Common myeloid progenitor, CD34-positive (primary cell): ENCODE measurements at regions of chr9 and their contacts with region 1.

Region 1: GRCh38 chr9:121278535-121279261 is 10.7 kb downstream of the GSN start:
- DNase-seq: peak; percentile 59 to 87 (median 83)
- H3K4me3 ChIP-seq: peak overlapping the region in 1 of 7 experiments; percentile 29
- H3K27ac ChIP-seq: no peak overlapping the region
- H3K4me1 ChIP-seq: peaks cover 14 to 92% (median 68%) of the 10 kb centered on the region in 4 experiments
- H3K27me3 ChIP-seq: no peaks in the 10 kb centered on the region

Region 2: GRCh38 chr9:121206516-121207370 is 72.0 kb before region 1 on chr9:
- CTCF ChIA-PET with region 1: interaction called, 82 read pairs
- POLR2A ChIA-PET with region 1: no interaction called
- DNase-seq: no peak
- H3K4me3 ChIP-seq: no peak overlapping the region
- H3K27ac ChIP-seq: no peak overlapping the region
- H3K4me1 ChIP-seq: peaks cover 4 to 19% (median 8%) of the 10 kb centered on the region in 4 experiments
- H3K27me3 ChIP-seq: no peaks in the 10 kb centered on the region

Region 3: GRCh38 chr9:121261107-121261460 is 17.6 kb before region 1 on chr9:
- CTCF ChIA-PET with region 1: interaction called, 15 read pairs
- POLR2A ChIA-PET with region 1: interaction called, 5 read pairs
- DNase-seq: peak in 2 of 3 donors; percentile 50 to 62
- H3K4me3 ChIP-seq: no peak overlapping the region
- H3K27ac ChIP-seq: no peak overlapping the region
- H3K4me1 ChIP-seq: peaks cover 8 to 33% (median 14%) of the 10 kb centered on the region in 4 experiments
- H3K27me3 ChIP-seq: no peaks in the 10 kb centered on the region

Region 4: DNA sequence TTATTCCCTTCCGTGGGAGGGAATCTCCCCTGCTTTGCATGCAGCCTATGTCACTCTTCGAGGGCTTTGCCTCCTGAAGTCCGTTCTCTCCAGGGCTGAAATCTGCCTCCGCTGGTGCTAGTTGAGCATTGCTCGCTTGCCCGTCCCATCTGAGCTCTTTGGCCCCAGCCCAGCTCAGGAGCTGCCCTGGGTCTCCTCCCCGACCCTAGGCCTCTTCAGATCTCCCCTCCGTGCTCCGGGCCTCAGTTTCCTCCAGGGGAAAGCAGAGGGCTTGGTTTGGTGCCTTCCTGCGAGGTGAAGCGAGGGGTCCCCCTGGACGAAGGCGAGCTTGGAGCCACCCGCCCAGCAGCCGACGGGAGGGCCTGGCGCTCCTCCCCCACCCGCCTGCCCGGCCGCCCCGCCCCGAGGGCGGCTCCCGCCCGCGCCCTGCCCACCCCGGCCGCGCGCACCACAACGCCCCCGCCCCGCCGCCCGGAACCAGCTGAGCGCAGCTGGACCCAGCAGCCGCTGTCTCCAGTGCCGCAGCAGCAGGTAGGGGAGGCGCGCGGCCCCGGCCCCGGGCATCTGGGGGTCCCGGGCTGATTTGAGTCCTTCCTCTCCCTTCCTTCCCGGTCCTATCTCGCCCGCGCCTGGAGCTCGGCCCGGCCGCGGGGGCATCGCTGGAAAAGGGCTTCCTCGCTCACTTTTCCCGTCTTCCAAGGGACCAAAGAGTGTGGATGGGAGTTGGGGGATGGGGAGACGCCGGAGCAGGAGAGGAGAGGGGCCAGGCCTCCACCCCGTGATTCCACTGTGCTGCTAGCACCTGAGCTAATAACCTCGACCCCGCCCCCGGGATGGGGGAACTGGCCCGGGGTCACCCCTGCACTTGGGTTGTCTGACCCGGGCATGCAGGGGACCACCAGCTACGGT is 10.8 kb before region 1 on chr9 and contains the start of gene GSN:
- CTCF ChIA-PET with region 1: interaction called, 48 read pairs
- POLR2A ChIA-PET with region 1: no interaction called
- DNase-seq: peak in 2 of 3 donors; percentile 51 to 76
- H3K4me3 ChIP-seq: peak within 1 kb of the TSS; percentile 70 to 85 (median 78)
- H3K27ac ChIP-seq: peak within 1 kb of the TSS in 1 of 2 experiments; percentile 4
- H3K4me1 ChIP-seq: peaks cover 23 to 64% (median 56%) of the 10 kb centered on the region in 4 experiments
- H3K27me3 ChIP-seq: no peaks in the 10 kb centered on the region

Region 5: GRCh38 chr9:121299467-121300234 is 21.0 kb after region 1 on chr9:
- CTCF ChIA-PET with region 1: interaction called, 11 read pairs
- POLR2A ChIA-PET with region 1: interaction called, 6 read pairs
- DNase-seq: peak; percentile 29 to 72 (median 56)
- H3K4me3 ChIP-seq: peak overlapping the region; percentile 49 to 83 (median 60)
- H3K27ac ChIP-seq: peak overlapping the region in 1 of 2 experiments; percentile 27
- H3K4me1 ChIP-seq: peaks cover 4 to 36% (median 31%) of the 10 kb centered on the region in 4 experiments
- H3K27me3 ChIP-seq: peaks cover 0 to 2% (median 0%) of the 10 kb centered on the region in 5 experiments